Caki2 (cell line): ENCODE measurements at regions of chr6 and their contacts with region 1.

Region 1: GRCh38 chr6:121430514-121431460 is 4.7 kb upstream of the GJA1 start:
- DNase-seq: peak; percentile 48

Region 2: GRCh38 chr6:121694389-121695251 is 263.8 kb after region 1 on chr6:
- in situ Hi-C with region 1: loop called (anchors 10 kb)
- DNase-seq: no peak

Region 3: DNA sequence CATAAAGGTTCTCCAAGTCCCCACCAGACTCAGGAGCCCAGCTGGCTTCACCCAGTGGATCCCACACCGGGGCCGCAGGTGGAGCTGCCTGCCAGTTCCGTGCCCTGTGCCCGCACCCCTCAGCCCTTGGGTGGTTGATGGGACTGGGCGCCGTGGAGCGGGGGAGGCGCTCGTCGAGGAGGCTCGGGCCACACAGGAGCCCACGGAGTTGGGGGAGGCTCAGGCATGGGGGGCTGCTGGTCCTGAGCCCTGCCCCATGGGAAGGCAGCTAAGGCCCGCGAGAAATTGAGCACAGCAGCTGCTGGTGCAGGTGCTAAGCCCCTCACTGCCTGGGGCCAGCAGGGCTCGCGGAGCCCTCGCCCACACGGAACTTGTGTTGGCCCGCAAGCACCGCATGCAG is 734.2 kb after region 1 on chr6:
- in situ Hi-C with region 1: no loop called
- DNase-seq: no peak